ENCODE measurements at regions of chr3 and their contacts with region 1.

Region 1: DNA sequence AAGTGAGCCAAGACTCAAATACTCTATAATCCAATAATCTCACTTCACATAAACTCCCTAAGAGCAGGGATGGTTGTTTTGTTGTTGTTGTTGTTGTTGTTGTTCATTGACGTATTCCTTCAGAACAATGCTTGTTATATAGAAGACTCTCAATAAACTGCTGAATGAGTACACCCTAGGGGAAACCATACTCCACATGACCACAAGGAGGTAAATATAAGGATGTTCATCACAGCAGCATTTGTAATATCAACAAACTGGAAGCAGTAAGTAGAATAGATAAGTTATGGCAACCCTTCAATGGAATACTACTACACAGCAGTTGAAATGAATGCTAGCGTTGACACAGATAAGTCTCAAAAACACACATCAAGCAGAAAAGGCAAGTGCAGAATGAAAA is 62.4 kb upstream of the STIMATE start:
- DNase-seq: no peak
- ATAC-seq: no peak
- H3K4me3 ChIP-seq: no peak overlapping the region
- H3K4me3 Mint-ChIP-seq: no peak overlapping the region
- H3K27ac ChIP-seq: no peak overlapping the region
- H3K27ac Mint-ChIP-seq: peak overlapping the region; percentile 3
- H3K4me1 ChIP-seq: peaks cover 8 to 19% of the 10 kb centered on the region in 2 donors
- H3K4me1 Mint-ChIP-seq: peaks cover 45% of the 10 kb centered on the region
- H3K27me3 ChIP-seq: no peaks in the 10 kb centered on the region
- H3K27me3 Mint-ChIP-seq: no peaks in the 10 kb centered on the region
- CTCF ChIP-seq: no peak

Region 2: GRCh38 chr3:52925405-52926313 is 34.1 kb before region 1 on chr3:
- CTCF ChIA-PET with region 1: interaction called, 3 read pairs
- POLR2A ChIA-PET with region 1: no interaction called
- intact Hi-C with region 1: loop called (anchors 5 kb)
- DNase-seq: no peak
- ATAC-seq: no peak
- H3K4me3 ChIP-seq: no peak overlapping the region
- H3K4me3 Mint-ChIP-seq: no peak overlapping the region
- H3K27ac ChIP-seq: no peak overlapping the region
- H3K27ac Mint-ChIP-seq: no peak overlapping the region
- H3K4me1 ChIP-seq: peaks cover 9% of the 10 kb centered on the region in 2 donors
- H3K4me1 Mint-ChIP-seq: peaks cover 10% of the 10 kb centered on the region
- H3K27me3 ChIP-seq: no peaks in the 10 kb centered on the region
- H3K27me3 Mint-ChIP-seq: no peaks in the 10 kb centered on the region
- CTCF ChIP-seq: no peak

Region 3: GRCh38 chr3:53009826-53010539 is 50.2 kb after region 1 on chr3:
- CTCF ChIA-PET with region 1: interaction called, 3 read pairs
- POLR2A ChIA-PET with region 1: no interaction called
- intact Hi-C with region 1: loop called (anchors 10 kb)
- DNase-seq: no peak
- ATAC-seq: peak; percentile 17
- H3K4me3 ChIP-seq: no peak overlapping the region
- H3K4me3 Mint-ChIP-seq: no peak overlapping the region
- H3K27ac ChIP-seq: no peak overlapping the region
- H3K27ac Mint-ChIP-seq: peak overlapping the region; percentile 35
- H3K4me1 ChIP-seq: peaks cover 8 to 11% of the 10 kb centered on the region in 2 donors
- H3K4me1 Mint-ChIP-seq: peaks cover 38% of the 10 kb centered on the region
- H3K27me3 ChIP-seq: no peaks in the 10 kb centered on the region
- H3K27me3 Mint-ChIP-seq: no peaks in the 10 kb centered on the region
- CTCF ChIP-seq: no peak

Region 4: DNA sequence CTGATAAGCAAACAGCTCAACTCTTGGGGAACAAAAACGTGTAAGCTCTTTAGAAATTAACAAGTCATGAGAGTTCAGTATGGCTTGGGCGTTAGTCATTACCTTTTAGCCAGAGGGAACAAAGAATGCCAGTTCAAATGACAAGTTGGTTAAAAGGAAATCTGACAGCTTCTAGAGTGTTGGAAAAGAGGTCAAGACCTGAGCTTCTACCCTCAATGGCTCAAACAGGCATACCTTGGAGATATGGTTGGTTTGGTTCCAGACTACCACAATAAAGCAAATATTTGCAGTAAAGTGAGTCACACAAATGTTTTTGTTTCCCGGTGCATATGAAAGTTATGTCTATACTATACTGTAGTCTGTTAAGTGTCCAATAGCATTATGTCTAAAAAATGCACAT is 670.8 kb after region 1 on chr3:
- CTCF ChIA-PET with region 1: no interaction called
- POLR2A ChIA-PET with region 1: no interaction called
- intact Hi-C with region 1: no loop called
- DNase-seq: no peak
- ATAC-seq: no peak
- H3K4me3 ChIP-seq: no peak overlapping the region
- H3K4me3 Mint-ChIP-seq: no peak overlapping the region
- H3K27ac ChIP-seq: no peak overlapping the region
- H3K27ac Mint-ChIP-seq: no peak overlapping the region
- H3K4me1 ChIP-seq: no peaks in the 10 kb centered on the region
- H3K4me1 Mint-ChIP-seq: no peaks in the 10 kb centered on the region
- H3K27me3 ChIP-seq: peaks cover 0 to 7% (median 2%) of the 10 kb centered on the region in 4 experiments
- H3K27me3 Mint-ChIP-seq: peaks cover 20% of the 10 kb centered on the region
- CTCF ChIP-seq: no peak